Activated CD8-positive, alpha-beta memory T cell treated with anti-CD3 and anti-CD28 coated beads, Interleukin-2, amount 10 ng/mL, durations not matched to agents 7 days and 5 days (primary cell): ENCODE measurements at regions of chr14 and their contacts with region 1.

Region 1: DNA sequence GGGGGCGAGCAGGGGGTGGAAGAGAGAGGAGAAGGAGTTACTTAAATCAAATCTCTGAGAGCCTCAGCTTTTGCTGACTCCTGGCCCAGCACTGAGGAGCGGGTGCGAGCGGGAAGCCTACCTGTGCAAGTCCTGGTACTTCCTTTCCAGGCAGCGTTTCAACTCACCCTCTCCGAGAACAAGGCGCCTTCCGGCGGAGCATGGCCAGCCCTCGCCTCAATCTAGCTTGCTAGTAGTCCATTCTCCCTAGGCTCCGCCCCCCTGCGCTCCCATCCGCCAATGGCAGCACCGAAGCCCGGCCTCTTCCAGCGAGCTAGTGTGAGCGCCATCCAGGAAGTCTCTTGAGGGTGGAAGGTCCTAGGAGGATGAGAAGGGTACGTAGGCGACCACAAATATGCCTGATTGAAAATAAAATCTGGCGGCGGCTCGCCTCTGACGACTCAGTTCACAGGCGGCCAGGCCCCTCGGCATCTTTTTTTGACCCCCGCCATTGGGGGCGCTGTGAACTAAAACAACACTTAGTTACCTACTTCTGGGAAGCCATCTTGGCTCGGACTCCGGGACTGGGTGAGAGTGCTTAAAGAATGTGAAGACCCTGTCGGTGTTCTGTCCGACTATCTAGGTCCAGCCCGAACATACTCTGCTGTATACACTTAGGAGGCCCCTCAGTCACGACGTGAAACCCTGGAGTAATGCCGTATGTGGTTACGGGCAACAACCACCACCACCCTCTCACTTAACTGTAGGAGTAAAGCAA is at the start of gene CHD8:
- DNase-seq: peak; percentile 100
- ATAC-seq: peak; percentile 98
- H3K4me3 Mint-ChIP-seq: peak within 1 kb of the TSS; percentile 91
- H3K27ac Mint-ChIP-seq: peak within 1 kb of the TSS; percentile 98
- H3K4me1 Mint-ChIP-seq: peaks cover 34% of the 10 kb centered on the region
- H3K27me3 Mint-ChIP-seq: no peaks in the 10 kb centered on the region
- total RNA-seq, gene CHD8: 130 to 138 TPM

Region 2: DNA sequence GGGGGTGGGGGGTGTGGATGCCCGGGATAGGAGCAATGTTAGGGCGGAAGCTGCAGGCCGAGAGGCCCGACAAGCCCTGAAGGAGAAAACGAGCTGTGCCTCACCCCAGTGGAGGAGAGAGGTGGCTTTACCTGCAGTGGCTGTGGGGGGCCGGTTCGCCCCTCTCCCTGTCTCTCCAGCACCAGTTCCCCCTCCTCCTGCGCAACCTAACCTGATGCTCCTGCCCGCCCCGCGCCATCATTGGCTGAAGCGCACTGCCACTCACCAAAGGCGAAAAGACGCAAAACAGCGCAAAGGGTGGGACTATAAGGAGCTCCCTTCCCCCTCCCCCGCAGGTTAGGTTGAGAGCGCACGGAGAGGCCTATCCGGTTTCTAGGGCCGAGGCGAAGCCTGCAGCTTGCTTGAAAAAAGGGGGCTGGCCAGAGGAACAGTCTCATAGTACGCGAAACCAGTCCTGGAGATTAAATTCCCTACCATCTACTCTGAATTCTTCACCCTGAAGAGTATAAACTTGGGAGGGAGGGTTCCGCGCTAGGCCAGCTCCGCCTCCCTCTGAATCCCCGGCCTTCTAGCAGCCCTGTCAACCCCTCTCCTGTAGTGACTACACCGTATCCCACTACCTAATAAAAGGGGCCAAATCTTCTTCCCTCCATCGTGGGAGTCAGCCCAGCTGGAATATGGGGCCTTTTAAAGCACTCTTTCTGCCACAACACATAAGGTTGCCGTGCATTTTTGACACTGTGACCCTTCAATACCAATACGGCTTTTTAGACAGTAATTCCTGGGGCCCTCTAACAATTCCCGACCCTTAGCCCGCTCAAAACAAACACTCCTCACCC is 18.8 kb before region 1 on chr14:
- CTCF ChIA-PET with region 1: interaction called, 31 read pairs
- DNase-seq: peak; percentile 99
- ATAC-seq: peak; percentile 99
- H3K4me3 Mint-ChIP-seq: peak overlapping the region; percentile 96
- H3K27ac Mint-ChIP-seq: peak overlapping the region; percentile 78
- H3K4me1 Mint-ChIP-seq: peaks cover 53% of the 10 kb centered on the region
- H3K27me3 Mint-ChIP-seq: no peaks in the 10 kb centered on the region

Region 3: DNA sequence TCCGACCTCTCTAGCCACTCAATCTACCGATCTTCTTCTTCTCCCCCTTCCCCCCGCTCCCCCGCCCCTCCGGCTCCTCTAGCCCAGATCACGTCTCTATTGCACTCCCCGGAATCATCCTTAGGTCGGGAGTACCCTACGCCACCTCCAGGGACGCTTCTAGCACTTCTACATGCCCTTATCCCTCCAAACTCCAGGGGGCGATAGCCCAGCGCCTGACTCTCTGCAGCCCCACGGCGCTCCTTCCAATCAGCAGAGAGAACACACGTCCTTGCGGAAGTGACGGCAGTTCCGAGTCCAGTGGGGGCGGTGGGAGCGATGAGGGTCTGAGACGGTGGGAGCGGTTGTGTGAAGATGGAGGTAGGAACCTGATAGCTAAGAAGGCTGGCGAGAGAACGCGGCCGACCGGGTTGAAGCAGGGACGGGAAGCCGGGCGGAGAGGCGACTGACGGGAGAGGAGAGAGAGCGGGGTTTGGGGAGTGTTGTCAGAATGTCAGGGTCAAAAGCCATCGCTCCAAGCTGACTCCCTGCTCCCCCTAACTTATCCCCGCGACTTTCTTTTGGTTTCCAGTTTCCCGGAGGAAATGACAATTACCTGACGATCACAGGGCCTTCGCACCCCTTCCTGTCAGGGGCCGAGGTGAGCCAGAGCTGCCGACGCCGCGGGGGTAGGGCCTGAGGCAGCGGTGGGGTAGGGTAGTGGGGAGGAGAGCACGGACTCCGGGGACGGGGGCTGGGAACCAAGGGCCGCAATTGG is 21.0 kb after region 1 on chr14 and contains the starts of genes RAB2B and TOX4:
- CTCF ChIA-PET with region 1: interaction called, 38 read pairs
- DNase-seq: peak; percentile 97
- ATAC-seq: peak; percentile 98
- H3K4me3 Mint-ChIP-seq: peak within 1 kb of the TSS; percentile 99
- H3K27ac Mint-ChIP-seq: peak within 1 kb of the TSS; percentile 100
- H3K4me1 Mint-ChIP-seq: peaks cover 38% of the 10 kb centered on the region
- H3K27me3 Mint-ChIP-seq: no peaks in the 10 kb centered on the region
- total RNA-seq, gene RAB2B: 26.1 to 28.2 TPM
- total RNA-seq, gene TOX4: 72.7 to 87.1 TPM

Region 4: GRCh38 chr14:21579976-21580375 is 123.9 kb after region 1 on chr14 and contains the start of gene OR10G3:
- CTCF ChIA-PET with region 1: no interaction called
- DNase-seq: no peak
- ATAC-seq: no peak
- H3K4me3 Mint-ChIP-seq: no peak within 1 kb of the TSS
- H3K27ac Mint-ChIP-seq: no peak within 1 kb of the TSS
- H3K4me1 Mint-ChIP-seq: peaks cover 2% of the 10 kb centered on the region
- H3K27me3 Mint-ChIP-seq: peaks cover 38% of the 10 kb centered on the region
- total RNA-seq, gene OR10G3: not detected

Region 5: GRCh38 chr14:21723431-21724045 is 267.4 kb after region 1 on chr14:
- CTCF ChIA-PET with region 1: no interaction called
- DNase-seq: peak; percentile 67
- ATAC-seq: peak; percentile 91
- H3K4me3 Mint-ChIP-seq: peak overlapping the region; percentile 68
- H3K27ac Mint-ChIP-seq: peak overlapping the region; percentile 1
- H3K4me1 Mint-ChIP-seq: peaks cover 5% of the 10 kb centered on the region
- H3K27me3 Mint-ChIP-seq: peaks cover 37% of the 10 kb centered on the region